ENCODE measurements at regions of chr17 and their contacts with region 1.

Region 1: GRCh38 chr17:40633871-40634270 is 13.7 kb downstream of the SMARCE1 start:
- DNase-seq: no peak
- H3K4me3 ChIP-seq: no peak overlapping the region
- H3K27me3 ChIP-seq: no peaks in the 10 kb centered on the region
- CTCF ChIP-seq: no peak

Region 2: GRCh38 chr17:40618753-40619625 is 14.9 kb before region 1 on chr17:
- CTCF ChIA-PET with region 1: interaction called, 18 read pairs
- POLR2A ChIA-PET with region 1: no interaction called
- DNase-seq: no peak
- H3K4me3 ChIP-seq: no peak overlapping the region
- H3K27me3 ChIP-seq: peaks cover 6% of the 10 kb centered on the region
- CTCF ChIP-seq: no peak